ENCODE measurements at regions of chr5 and their contacts with region 1.

Region 1: DNA sequence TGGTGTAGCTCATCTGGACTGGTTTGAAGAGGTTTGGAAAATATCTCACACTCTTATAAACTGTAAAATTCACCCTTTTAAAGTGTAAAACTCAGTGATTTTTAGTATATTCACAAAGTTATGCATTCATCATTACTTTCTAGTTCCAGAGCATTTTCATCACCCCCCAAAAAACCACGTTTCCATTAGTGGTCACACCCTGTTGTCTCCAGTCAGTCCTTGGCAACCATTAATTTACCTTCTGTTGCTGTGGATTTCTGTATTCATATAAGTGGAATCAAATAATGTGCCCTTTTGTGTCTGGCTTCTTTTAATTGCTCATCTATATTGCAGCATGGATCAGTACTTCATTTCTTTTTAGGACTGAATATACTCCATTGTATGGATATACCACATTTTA is 18.4 kb downstream of the NIPBL start:
- DNase-seq: no peak
- ATAC-seq: no peak
- H3K4me3 ChIP-seq: no peak overlapping the region
- H3K27ac ChIP-seq: no peak overlapping the region
- H3K4me1 ChIP-seq: no peaks in the 10 kb centered on the region
- H3K27me3 ChIP-seq: no peaks in the 10 kb centered on the region
- CTCF ChIP-seq: no peak
- EP300 ChIP-seq: no peak
- POLR2A ChIP-seq: no peak
- RAD21 ChIP-seq: no peak

Region 2: GRCh38 chr5:36919238-36919637 is 24.3 kb after region 1 on chr5:
- CTCF ChIA-PET with region 1: no interaction called
- POLR2A ChIA-PET with region 1: no interaction called
- in situ Hi-C with region 1: no loop called
- intact Hi-C with region 1: loop called (anchors 1 kb)
- DNase-seq: no peak
- ATAC-seq: peak; percentile 55; the same call in 2 of the 3 replicates
- H3K4me3 ChIP-seq: no peak overlapping the region
- H3K27ac ChIP-seq: no peak overlapping the region
- H3K4me1 ChIP-seq: no peaks in the 10 kb centered on the region
- H3K27me3 ChIP-seq: no peaks in the 10 kb centered on the region
- CTCF ChIP-seq: no peak
- EP300 ChIP-seq: no peak
- POLR2A ChIP-seq: no peak
- RAD21 ChIP-seq: no peak

Measured in K562 (cell line).